ENCODE measurements at regions of chr18 and their contacts with region 1.

Region 1: GRCh38 chr18:58529714-58530354 is 99.1 kb downstream of the ALPK2 start:
- DNase-seq: peak; percentile 69
- ATAC-seq: peak; percentile 34; the same call in 2 of the 3 replicates
- H3K4me3 ChIP-seq: no peak overlapping the region
- H3K27ac ChIP-seq: no peak overlapping the region
- H3K4me1 ChIP-seq: peaks cover 57% of the 10 kb centered on the region
- H3K27me3 ChIP-seq: no peaks in the 10 kb centered on the region
- CTCF ChIP-seq: peak; percentile 92
- EP300 ChIP-seq: peak in 1 of 2 experiments; percentile 9; a peak in 1 of 4 replicates
- POLR2A ChIP-seq: no peak
- RAD21 ChIP-seq: peak; percentile 90

Region 2: GRCh38 chr18:58455314-58456188 is 74.3 kb before region 1 on chr18:
- CTCF ChIA-PET with region 1: no interaction called
- POLR2A ChIA-PET with region 1: no interaction called
- in situ Hi-C with region 1: no loop called
- intact Hi-C with region 1: no loop called
- DNase-seq: no peak
- ATAC-seq: peak; percentile 56; the same call in 2 of the 3 replicates
- H3K4me3 ChIP-seq: no peak overlapping the region
- H3K27ac ChIP-seq: no peak overlapping the region
- H3K4me1 ChIP-seq: peaks cover 52% of the 10 kb centered on the region
- H3K27me3 ChIP-seq: no peaks in the 10 kb centered on the region
- CTCF ChIP-seq: no peak
- EP300 ChIP-seq: no peak
- POLR2A ChIP-seq: no peak
- RAD21 ChIP-seq: no peak

Region 3: DNA sequence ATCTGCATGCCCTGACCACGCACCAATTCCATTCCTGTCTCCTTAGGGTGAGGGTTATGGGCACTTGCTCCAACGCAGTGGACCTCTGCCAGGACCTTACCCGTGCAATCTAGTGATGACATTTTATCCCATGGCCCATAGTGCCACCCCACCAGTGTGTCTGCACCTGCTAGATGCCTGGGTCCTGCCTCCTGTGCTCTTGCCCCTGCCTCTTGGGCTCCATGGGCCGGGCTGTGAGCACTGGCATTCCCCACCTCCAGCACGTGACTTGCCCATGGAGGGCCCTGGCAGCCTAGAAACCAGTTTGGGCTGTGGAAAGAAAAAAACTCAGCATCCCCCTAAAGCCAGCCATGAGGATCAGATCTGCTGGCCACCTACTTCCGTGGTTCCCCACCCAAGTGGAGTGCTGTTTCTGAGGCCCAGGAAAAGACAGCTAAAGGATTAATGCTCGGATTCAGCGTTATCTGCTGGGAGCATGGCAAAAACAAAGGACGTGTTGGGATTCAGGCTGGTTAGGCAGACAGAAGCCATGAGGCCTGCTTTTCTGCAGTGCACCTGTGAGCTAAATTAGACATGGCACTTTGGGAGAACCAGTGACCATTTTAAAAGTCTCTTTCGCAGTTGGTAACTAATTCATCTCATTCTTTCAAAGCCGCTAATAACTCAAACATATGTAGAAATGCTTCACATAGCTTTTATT is 30.2 kb before region 1 on chr18:
- CTCF ChIA-PET with region 1: no interaction called
- POLR2A ChIA-PET with region 1: interaction called, 6 read pairs
- in situ Hi-C with region 1: no loop called
- intact Hi-C with region 1: loop called (anchors 1 kb)
- DNase-seq: no peak
- ATAC-seq: peak; percentile 33
- H3K4me3 ChIP-seq: no peak overlapping the region
- H3K27ac ChIP-seq: peak overlapping the region; percentile 74
- H3K4me1 ChIP-seq: peaks cover 86% of the 10 kb centered on the region
- H3K27me3 ChIP-seq: no peaks in the 10 kb centered on the region
- CTCF ChIP-seq: no peak
- EP300 ChIP-seq: no peak
- POLR2A ChIP-seq: no peak
- RAD21 ChIP-seq: no peak

Region 4: GRCh38 chr18:58605027-58606020 is 75.5 kb after region 1 on chr18:
- CTCF ChIA-PET with region 1: no interaction called
- POLR2A ChIA-PET with region 1: interaction called, 3 read pairs
- in situ Hi-C with region 1: loop called (anchors 5 kb)
- intact Hi-C with region 1: loop called (anchors 2 kb)
- DNase-seq: peak; percentile 99
- ATAC-seq: peak; percentile 92
- H3K4me3 ChIP-seq: no peak overlapping the region
- H3K27ac ChIP-seq: peak overlapping the region; percentile 45
- H3K4me1 ChIP-seq: peaks cover 78% of the 10 kb centered on the region
- H3K27me3 ChIP-seq: no peaks in the 10 kb centered on the region
- CTCF ChIP-seq: no peak
- EP300 ChIP-seq: peak in 1 of 2 experiments; percentile 95; a peak in 3 of 4 replicates
- POLR2A ChIP-seq: no peak
- RAD21 ChIP-seq: no peak

Region 5: DNA sequence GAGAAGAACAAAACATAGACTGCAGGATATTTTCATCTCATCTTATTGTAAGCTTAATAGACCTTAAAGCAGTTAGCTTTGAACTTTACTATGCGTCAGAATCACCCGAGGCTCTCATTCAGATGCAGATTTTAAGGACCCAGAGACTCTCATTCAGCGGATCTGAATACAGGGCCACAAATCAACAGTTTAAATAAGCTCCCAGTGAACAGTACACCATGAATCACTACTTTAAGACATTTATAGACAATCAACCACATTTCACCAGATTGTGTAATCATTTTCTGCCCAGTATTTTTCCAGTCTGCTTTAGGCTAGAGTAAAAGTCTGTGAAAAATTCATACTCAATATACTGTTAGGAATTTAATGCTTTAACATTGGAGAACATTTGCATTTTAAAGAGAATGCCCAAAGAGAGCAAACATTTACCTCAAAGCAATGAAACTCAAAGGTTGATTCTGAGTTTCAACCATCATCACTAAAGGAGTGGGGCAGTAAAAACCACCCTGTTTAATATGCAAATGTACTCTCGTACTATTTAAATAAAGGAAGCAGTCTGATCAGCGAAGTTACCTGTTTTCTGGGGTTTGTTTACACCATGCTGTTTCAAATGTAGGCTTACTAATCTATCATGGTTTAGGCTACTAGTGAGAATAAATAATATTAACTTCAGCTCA is 110.1 kb after region 1 on chr18:
- CTCF ChIA-PET with region 1: no interaction called
- POLR2A ChIA-PET with region 1: no interaction called
- in situ Hi-C with region 1: no loop called
- intact Hi-C with region 1: no loop called
- DNase-seq: no peak
- ATAC-seq: no peak
- H3K4me3 ChIP-seq: no peak overlapping the region
- H3K27ac ChIP-seq: no peak overlapping the region
- H3K4me1 ChIP-seq: peaks cover 13% of the 10 kb centered on the region
- H3K27me3 ChIP-seq: peaks cover 0 to 11% of the 10 kb centered on the region in 2 experiments; a peak in 1 of 5 replicates
- CTCF ChIP-seq: no peak
- EP300 ChIP-seq: no peak
- POLR2A ChIP-seq: no peak
- RAD21 ChIP-seq: no peak

Region 6: GRCh38 chr18:58738322-58738721 is 208.5 kb after region 1 on chr18:
- CTCF ChIA-PET with region 1: no interaction called
- POLR2A ChIA-PET with region 1: no interaction called
- in situ Hi-C with region 1: no loop called
- intact Hi-C with region 1: no loop called
- DNase-seq: no peak
- ATAC-seq: no peak
- H3K4me3 ChIP-seq: no peak overlapping the region
- H3K27ac ChIP-seq: no peak overlapping the region
- H3K4me1 ChIP-seq: no peaks in the 10 kb centered on the region
- H3K27me3 ChIP-seq: no peaks in the 10 kb centered on the region
- CTCF ChIP-seq: no peak
- EP300 ChIP-seq: no peak
- POLR2A ChIP-seq: no peak
- RAD21 ChIP-seq: no peak

Region 7: DNA sequence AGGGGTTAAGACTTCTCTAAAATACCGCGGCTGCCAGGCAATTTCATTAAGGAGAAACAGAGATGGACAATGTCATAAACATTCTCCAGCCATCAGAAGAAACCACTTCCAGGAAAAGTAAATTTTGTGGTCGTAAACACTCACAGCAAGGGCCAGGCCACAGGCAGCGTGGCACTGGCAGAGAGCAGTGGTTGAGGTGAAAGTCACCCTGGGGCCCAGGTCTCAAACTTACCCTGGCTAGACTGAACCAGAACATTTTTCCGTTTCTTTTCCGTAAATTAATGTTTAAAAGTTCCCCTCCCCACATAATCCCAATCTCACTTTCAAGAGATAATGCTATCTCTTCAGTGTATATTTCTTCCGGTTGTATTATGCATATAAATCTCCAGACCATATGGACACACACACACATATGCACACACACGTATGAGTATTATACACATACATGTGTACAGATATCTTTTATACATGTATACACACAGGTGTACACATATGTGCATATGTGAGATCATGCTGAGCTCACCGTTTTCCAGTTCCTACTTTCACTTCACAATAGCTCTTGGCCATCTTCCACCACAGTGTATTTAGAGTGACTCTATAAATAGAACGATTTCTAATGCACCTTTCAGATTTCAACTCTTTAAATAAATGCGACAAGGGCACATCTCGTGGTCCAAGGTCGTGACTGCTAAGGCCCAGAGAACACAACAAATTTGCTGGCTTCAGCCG is 231.6 kb after region 1 on chr18:
- CTCF ChIA-PET with region 1: interaction called, 10 read pairs
- POLR2A ChIA-PET with region 1: interaction called, 3 read pairs
- in situ Hi-C with region 1: loop called (anchors 5 kb)
- intact Hi-C with region 1: loop called (anchors 2 kb)
- DNase-seq: no peak
- ATAC-seq: no peak
- H3K4me3 ChIP-seq: no peak overlapping the region
- H3K27ac ChIP-seq: no peak overlapping the region
- H3K4me1 ChIP-seq: peaks cover 45% of the 10 kb centered on the region
- H3K27me3 ChIP-seq: no peaks in the 10 kb centered on the region; a peak in 1 of 5 replicates
- CTCF ChIP-seq: no peak
- EP300 ChIP-seq: no peak
- POLR2A ChIP-seq: no peak
- RAD21 ChIP-seq: no peak

Region 8: GRCh38 chr18:59070181-59070912 is 540.5 kb after region 1 on chr18:
- CTCF ChIA-PET with region 1: no interaction called
- POLR2A ChIA-PET with region 1: no interaction called
- in situ Hi-C with region 1: loop called (anchors 25 kb)
- intact Hi-C with region 1: no loop called
- DNase-seq: peak; percentile 54
- ATAC-seq: peak; percentile 95
- H3K4me3 ChIP-seq: no peak overlapping the region
- H3K27ac ChIP-seq: no peak overlapping the region
- H3K4me1 ChIP-seq: no peaks in the 10 kb centered on the region
- H3K27me3 ChIP-seq: no peaks in the 10 kb centered on the region
- CTCF ChIP-seq: peak; percentile 86
- EP300 ChIP-seq: peak in 1 of 2 experiments; percentile 13; a peak in 1 of 4 replicates
- POLR2A ChIP-seq: no peak
- RAD21 ChIP-seq: peak; percentile 52